Gastrocnemius medialis (tissue), 4 donors: ENCODE measurements at regions of chr1 and their contacts with region 1.

Region 1: GRCh38 chr1:37595440-37596319 is at the start of gene GNL2:
- DNase-seq: peak; percentile 94 to 95
- ATAC-seq: peak; percentile 99
- H3K4me3 ChIP-seq: peak within 1 kb of the TSS; percentile 70 to 93 (median 79)
- H3K27ac ChIP-seq: peak within 1 kb of the TSS; percentile 83 to 92 (median 89)
- H3K4me1 ChIP-seq: peaks cover 15 to 18% of the 10 kb centered on the region in 2 donors
- H3K27me3 ChIP-seq: no peaks in the 10 kb centered on the region
- CTCF ChIP-seq: no peak
- POLR2A ChIP-seq: peak; percentile 80 to 89
- total RNA-seq, gene GNL2: 37.2 to 49.1 (median 43.2) TPM

Region 2: DNA sequence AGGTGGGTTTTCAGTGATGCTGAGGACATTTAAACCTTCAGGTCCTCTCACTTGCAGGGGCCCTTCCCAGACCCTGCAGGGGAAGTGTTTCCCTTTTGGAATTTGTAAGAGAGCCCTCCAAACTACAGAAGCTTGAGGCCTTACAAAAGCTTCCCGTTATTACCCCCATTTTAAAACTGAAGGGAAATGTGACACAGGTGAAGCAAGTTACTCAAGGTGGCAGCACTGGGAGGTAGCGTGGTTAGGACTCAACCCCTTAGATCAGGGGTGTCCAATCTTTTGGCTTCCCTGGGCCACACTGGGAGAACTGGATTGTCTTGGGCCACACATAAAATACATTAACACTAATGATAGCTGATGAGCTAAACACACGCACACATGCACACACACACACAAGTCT is 137.2 kb before region 1 on chr1:
- in situ Hi-C with region 1: no loop called
- intact Hi-C with region 1: loop called (anchors 5 kb)
- DNase-seq: no peak
- ATAC-seq: no peak
- H3K4me3 ChIP-seq: no peak overlapping the region
- H3K27ac ChIP-seq: no peak overlapping the region
- H3K4me1 ChIP-seq: peaks cover 6 to 8% of the 10 kb centered on the region in 2 donors
- H3K27me3 ChIP-seq: no peaks in the 10 kb centered on the region
- CTCF ChIP-seq: no peak
- POLR2A ChIP-seq: no peak

Region 3: DNA sequence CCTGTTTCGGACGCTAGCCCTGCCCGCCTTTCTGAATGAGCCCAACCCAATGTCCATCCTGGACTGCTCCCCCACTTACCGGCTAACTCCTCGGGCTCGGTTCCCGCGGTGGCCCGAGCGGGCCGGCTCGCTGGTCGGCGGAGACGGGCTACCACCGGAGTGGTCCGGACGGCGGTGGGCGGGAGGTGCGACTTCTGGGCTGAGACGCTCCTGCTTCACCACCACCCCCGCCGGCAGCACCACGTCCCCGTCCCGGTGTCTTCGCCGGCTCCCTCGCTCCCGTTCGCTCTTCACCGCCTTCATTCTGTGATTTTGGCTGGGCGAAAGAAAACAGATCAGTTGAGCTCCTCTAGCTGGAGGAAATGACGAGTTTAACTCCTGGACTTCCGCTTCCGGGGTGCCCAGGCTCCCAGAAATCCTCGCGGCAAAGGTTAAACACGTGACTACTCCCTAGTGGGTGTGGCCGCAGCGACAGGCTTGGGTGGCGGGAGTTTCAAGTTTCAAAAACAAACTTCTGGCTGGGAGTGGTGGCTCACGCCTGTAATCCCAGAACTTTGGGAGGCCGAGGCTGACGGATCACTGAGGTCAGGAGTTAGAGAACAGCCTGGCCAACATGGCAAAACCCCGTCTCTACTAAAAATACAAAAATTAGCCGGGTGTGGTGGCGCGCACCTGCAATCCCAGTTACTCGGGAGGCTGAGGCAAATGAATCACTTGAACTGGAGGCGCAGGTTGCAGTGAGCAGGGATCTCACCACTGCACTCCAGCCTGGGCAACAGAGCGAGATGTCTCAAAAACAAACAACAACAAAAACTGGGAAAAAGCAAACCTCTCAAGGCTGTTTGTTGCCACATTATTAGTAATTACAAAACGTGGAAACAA is 41.5 kb before region 1 on chr1 and contains the start of gene SNIP1:
- in situ Hi-C with region 1: loop called in 2 of 4 experiments (anchors 5 kb)
- intact Hi-C with region 1: loop called (anchors 1 kb)
- DNase-seq: peak; percentile 91 to 92
- ATAC-seq: peak; percentile 98
- H3K4me3 ChIP-seq: peak within 1 kb of the TSS; percentile 71 to 100 (median 92)
- H3K27ac ChIP-seq: peak within 1 kb of the TSS; percentile 83 to 94 (median 88)
- H3K4me1 ChIP-seq: peaks cover 17 to 21% of the 10 kb centered on the region in 2 donors
- H3K27me3 ChIP-seq: no peaks in the 10 kb centered on the region
- CTCF ChIP-seq: no peak
- POLR2A ChIP-seq: peak; percentile 65 to 81
- total RNA-seq, gene SNIP1: 5.2 to 9.2 (median 6.5) TPM

Region 4: DNA sequence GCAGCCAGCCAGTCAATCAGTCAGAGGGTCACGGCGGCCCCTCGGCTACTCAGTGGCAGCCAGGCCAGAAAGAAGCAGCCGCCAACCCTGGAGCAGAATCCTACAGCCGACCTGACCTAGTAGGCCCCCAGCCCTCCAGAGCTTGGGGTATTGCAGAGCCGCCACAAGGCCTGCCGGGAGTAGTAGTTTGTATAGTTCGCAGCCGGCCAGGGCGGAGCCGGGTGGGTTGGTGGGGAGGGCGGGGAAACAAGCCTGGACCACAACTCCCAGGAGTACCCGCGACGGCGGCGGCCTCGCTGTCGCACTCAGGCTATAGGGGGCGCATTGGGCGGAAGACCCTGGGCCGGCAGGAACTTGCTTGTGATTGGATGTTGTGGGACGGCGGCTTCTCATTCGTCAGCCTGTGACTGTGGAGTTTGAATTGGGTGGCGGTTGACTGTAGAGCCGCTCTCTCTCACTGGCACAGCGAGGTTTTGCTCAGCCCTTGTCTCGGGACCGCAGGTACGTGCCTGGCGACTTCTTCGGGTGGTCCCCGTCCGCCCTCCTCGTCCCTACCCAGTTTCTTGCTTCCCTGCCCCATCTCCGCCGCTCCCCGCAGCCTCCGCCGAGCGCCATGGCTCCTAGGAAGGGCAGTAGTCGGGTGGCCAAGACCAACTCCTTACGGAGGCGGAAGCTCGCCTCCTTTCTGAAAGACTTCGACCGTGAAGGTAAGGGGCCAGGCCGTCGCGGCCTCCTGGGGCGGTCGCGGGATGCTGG is 96.6 kb after region 1 on chr1 and contains the start of gene CDCA8:
- in situ Hi-C with region 1: loop called in 2 of 4 experiments (anchors 10 kb)
- intact Hi-C with region 1: loop called (anchors 2 kb)
- DNase-seq: peak; percentile 97
- ATAC-seq: peak; percentile 80 to 83
- H3K4me3 ChIP-seq: peak within 1 kb of the TSS; percentile 85 to 90 (median 88)
- H3K27ac ChIP-seq: peak within 1 kb of the TSS; percentile 91 to 96 (median 94)
- H3K4me1 ChIP-seq: peaks cover 28% of the 10 kb centered on the region in 2 donors
- H3K27me3 ChIP-seq: no peaks in the 10 kb centered on the region
- CTCF ChIP-seq: peak in 3 of 5 experiments; percentile 49 to 68 (median 51)
- POLR2A ChIP-seq: peak in 1 of 2 donors; percentile 45
- total RNA-seq, gene CDCA8: 0.46 to 1.5 (median 0.60) TPM in 3 of 4 donors, not detected in the other

Region 5: GRCh38 chr1:37776946-37777516 is 181.4 kb after region 1 on chr1:
- in situ Hi-C with region 1: no loop called
- intact Hi-C with region 1: no loop called
- DNase-seq: no peak
- ATAC-seq: no peak
- H3K4me3 ChIP-seq: no peak overlapping the region
- H3K27ac ChIP-seq: no peak overlapping the region
- H3K4me1 ChIP-seq: no peaks in the 10 kb centered on the region
- H3K27me3 ChIP-seq: no peaks in the 10 kb centered on the region
- CTCF ChIP-seq: no peak
- POLR2A ChIP-seq: no peak

Region 6: GRCh38 chr1:37859507-37860345 is 264.0 kb after region 1 on chr1 and contains the start of gene MTF1:
- in situ Hi-C with region 1: no loop called
- intact Hi-C with region 1: loop called (anchors 1 kb)
- DNase-seq: peak; percentile 98
- ATAC-seq: peak; percentile 94 to 96
- H3K4me3 ChIP-seq: peak within 1 kb of the TSS; percentile 80 to 96 (median 90)
- H3K27ac ChIP-seq: peak within 1 kb of the TSS; percentile 92 to 99 (median 96)
- H3K4me1 ChIP-seq: peaks cover 30 to 34% of the 10 kb centered on the region in 2 donors
- H3K27me3 ChIP-seq: no peaks in the 10 kb centered on the region
- CTCF ChIP-seq: peak; percentile 88 to 95 (median 92)
- POLR2A ChIP-seq: peak; percentile 85 to 94
- total RNA-seq, gene MTF1: 4.0 to 9.4 (median 6.4) TPM